ENCODE measurements at regions of chr15 and their contacts with region 1.

Region 1: GRCh38 chr15:66356345-66357236 is at the start of gene TIPIN:
- DNase-seq: peak; percentile 95 to 97
- ATAC-seq: peak; percentile 98 to 100 (median 99)
- H3K4me3 ChIP-seq: peak within 1 kb of the TSS; percentile 47 to 76 (median 59)
- H3K27ac ChIP-seq: peak within 1 kb of the TSS in 9 of 10 donors; percentile 30 to 87 (median 61)
- H3K4me1 ChIP-seq: peaks cover 0 to 14% (median 5%) of the 10 kb centered on the region in 9 donors
- H3K27me3 ChIP-seq: no peaks in the 10 kb centered on the region
- CTCF ChIP-seq: no peak
- total RNA-seq, gene TIPIN: 2.4 to 5.4 (median 3.4) TPM

Region 2: GRCh38 chr15:66386204-66387123 is 29.9 kb after region 1 on chr15 and contains the start of gene MAP2K1:
- intact Hi-C with region 1: loop called in 1 of 10 experiments (anchors 1 kb)
- DNase-seq: peak; percentile 99
- ATAC-seq: peak; percentile 97 to 100 (median 98)
- H3K4me3 ChIP-seq: peak within 1 kb of the TSS; percentile 81 to 98 (median 92)
- H3K27ac ChIP-seq: peak within 1 kb of the TSS; percentile 82 to 97 (median 96)
- H3K4me1 ChIP-seq: peaks cover 4 to 53% (median 45%) of the 10 kb centered on the region in 9 donors
- H3K27me3 ChIP-seq: no peaks in the 10 kb centered on the region
- CTCF ChIP-seq: peak; percentile 54 to 97 (median 86)
- total RNA-seq, gene MAP2K1: 30.9 to 61.3 (median 44.7) TPM